AG04450 (cell line): ENCODE measurements at regions of chr9 and their contacts with region 1.

Region 1: DNA sequence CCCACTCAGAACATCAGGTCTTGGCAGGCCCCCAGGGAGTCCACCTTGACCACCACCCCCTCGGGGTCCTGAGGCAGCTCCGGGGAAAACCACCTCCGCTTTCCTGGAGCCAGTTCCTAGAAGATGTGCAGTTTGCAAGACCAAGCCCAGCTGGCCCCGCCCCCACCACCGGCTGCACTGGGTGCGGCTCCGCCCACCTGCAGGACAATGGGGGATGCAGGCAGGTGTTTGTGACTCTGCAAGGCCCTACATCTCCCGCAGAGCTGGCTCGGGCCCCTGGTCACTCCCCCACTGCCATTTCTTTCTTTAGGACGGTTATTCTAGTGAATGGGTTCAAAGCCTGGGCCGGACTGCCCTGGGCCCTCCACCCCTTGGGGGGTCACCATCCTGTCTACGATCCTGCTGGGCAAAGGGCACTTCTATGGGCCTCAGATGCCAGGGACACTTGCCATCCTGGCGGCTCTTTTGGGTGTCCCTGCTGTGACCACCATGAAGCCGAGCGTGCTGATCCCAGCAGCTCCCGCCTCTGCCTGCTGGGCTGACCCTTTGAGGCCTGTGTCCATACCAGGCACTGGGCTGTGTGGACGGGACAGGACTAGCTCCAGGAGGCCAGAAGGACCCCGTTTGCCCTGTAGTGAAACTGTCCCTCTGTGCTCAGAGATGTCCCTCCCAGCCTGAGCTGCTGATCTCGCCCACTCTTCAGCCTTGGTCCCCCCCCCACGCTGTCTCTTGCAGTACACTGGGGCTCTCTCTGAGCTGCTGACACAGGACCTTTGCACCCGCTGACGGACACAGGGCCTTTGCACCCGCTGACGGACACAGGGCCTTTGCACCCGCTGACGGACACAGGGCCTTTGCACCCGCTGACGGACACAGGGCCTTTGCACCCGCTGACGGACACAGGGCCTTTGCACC is 5.9 kb upstream of the NACC2 start:
- DNase-seq: no peak
- H3K4me3 ChIP-seq: no peak overlapping the region
- H3K27ac ChIP-seq: no peak overlapping the region
- H3K27me3 ChIP-seq: no peaks in the 10 kb centered on the region
- CTCF ChIP-seq: no peak

Region 2: DNA sequence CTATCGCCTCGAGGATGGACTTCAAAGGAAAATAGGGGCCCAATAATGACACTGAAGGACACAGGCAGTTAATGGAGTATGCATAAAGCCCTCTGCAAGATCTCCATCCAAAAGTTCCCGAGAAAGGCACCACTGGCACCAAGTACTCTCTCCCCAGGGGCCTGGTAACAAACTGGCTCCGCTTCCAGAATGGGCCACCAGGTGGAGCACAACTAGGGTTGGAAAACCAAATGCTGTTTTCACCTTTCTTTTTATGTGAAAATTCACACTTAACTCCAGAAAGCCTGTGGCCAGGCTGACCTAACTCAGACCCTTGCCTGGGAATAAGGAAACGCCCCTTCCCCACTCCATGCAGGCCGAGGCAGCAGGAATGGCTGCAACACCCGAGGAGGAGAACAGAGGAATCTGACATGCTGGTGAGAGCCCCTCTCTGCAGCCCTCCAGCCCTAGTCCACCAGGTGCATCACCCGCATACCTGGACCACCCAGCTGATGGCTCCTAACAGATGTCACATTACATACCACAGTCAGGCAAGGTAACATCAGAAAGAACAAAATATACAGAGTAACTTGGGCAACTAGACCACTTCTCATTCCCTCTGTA is 236.4 kb before region 1 on chr9:
- CTCF ChIA-PET with region 1: no interaction called
- POLR2A ChIA-PET with region 1: interaction called, 13 read pairs
- DNase-seq: no peak
- H3K4me3 ChIP-seq: no peak overlapping the region
- H3K27ac ChIP-seq: no peak overlapping the region
- H3K27me3 ChIP-seq: no peaks in the 10 kb centered on the region
- CTCF ChIP-seq: peak; percentile 88

Region 3: DNA sequence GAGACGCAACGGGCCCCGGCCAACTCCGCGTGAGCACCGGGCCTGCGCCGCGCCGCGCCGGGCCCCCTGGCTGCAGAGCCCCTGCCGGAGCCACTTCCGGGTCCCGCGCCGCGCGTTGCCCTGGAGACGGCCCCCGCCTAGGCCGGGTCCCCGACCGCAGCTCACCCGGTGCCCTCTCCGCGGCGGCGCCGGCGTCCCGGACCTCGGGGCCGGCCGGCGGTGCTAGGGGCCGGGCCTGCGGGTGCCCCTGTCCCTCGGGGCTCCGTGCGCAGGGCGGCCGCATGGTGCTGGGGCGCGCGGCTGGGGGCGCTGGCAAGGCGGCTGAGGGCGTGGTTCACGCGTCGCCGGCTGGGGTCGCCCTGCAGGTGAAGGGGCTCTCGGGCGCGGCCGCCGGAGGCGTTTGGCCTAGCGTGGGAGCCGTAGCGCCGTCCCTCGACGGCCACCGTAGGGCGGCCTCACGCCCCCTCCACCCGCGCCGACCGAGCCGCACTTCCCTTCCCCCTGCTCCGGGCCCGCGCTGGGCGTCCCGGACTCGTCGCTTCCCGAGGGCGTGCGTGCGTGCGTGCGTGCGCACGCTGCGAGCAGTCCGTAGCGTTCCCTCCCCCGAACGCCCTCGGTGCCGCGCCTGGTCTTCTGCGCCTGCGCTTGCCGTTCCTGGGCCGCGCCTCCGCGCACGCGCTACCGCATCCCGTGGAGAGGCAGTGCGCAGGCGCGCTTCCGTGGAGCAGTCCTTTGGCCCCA is 17.5 kb after region 1 on chr9 and contains the start of gene TMEM250:
- CTCF ChIA-PET with region 1: no interaction called
- POLR2A ChIA-PET with region 1: no interaction called
- DNase-seq: peak; percentile 94
- H3K4me3 ChIP-seq: peak within 1 kb of the TSS; percentile 67
- H3K27ac ChIP-seq: no peak within 1 kb of the TSS
- H3K27me3 ChIP-seq: peaks cover 4% of the 10 kb centered on the region
- CTCF ChIP-seq: no peak
- polyA plus RNA-seq, gene TMEM250: 8.8 and 12.7 TPM in 2 replicates

Region 4: DNA sequence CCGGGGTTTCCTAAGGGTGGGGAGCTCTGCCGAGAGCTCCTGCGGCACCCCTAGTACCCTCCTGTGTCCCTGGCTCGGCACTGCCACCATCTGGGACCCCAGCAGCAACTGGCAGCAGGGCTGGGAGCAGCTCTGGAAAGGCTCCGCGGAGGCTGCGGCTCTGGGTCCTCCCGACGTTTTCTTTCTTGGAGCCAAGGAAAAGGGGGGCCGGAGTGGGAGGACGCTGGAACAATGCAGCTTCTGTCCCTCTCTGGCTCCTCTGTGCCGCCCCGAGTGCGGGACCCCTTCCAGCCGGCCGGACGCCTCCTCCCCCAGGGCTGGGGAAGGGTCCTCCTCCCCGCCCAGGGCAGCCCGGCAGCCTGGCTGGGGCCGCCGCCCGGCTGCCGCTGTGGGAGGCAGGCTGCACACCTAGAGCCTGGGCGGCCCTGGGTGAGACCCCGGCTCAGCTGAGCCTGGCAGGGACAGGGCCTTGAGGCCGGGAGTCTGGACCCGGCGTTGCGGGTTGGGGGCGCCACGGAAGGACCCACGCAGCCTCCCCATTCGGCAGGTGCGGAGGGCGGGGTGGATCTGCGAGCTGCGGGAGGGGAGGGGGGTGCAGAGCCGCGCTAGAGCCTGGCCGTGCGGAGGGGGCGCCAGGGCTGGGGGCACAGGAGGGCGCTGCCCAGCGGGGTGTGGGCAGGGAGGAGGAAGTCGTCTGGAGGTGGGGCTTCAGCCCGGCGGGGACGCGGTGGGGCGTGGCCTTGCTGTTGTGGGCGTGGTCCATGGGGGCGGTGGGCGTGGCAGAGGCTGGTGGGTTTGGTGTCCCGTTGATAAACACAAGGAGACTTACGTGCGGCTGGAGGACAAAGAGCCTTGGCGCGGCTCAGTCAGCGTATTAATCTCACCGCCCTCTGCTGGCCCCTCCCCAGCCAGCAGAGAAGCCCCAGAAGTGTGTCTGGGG is 241.5 kb after region 1 on chr9:
- CTCF ChIA-PET with region 1: no interaction called
- POLR2A ChIA-PET with region 1: no interaction called
- DNase-seq: peak; percentile 57
- H3K4me3 ChIP-seq: no peak overlapping the region
- H3K27ac ChIP-seq: peak overlapping the region; percentile 47
- H3K27me3 ChIP-seq: no peaks in the 10 kb centered on the region
- CTCF ChIP-seq: no peak